Head of caudate nucleus (tissue), 42 donors: ENCODE measurements at regions of chr3 and their contacts with region 1.

Region 1: GRCh38 chr3:42979044-42979972 is at the start of gene GASK1A:
- DNase-seq: peak in 41 of 42 donors; percentile 13 to 75 (median 50)

Region 2: DNA sequence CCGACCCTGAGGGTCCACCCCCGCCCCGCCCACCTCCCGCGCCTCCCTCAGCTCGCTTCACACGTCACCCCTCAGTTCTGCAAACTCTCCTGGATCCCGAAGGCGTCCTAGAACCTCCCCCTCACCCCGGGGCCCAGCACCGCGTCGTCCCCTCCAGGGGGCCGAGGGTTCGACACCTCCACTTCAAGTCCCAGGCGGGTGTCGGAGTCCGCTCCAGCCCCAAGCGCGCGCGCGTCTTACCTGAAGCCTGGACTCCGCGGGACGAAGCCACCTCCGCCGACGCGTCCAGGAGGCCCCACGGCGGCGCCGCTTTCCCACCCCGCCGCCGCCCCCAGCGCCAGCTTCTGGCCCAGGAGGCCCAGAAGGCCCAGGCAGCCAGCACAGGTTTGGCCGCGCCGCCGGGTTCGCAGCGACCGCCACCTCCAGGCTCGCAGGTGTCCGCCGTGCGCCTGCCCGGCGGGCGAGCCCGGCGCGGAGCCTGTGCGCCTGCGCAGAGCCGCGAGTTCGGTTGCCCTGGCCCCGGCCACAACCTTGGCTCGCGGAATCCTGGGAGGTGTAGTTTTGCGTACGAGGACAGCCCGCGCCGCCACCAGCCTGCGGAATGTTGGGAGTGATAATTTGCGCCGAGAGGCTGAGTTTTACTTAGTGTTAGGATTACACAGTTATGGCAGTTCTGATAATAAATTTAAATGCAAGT is 126.4 kb after region 1 on chr3 and contains the start of gene POMGNT2:
- intact Hi-C with region 1: loop called (anchors 5 kb)
- DNase-seq: peak; percentile 83 to 97 (median 92)